ENCODE measurements at regions of chr12 and their contacts with region 1.

Region 1: GRCh38 chr12:124493809-124494750 is 73.3 kb downstream of the NCOR2 start:
- DNase-seq: peak; percentile 96
- CTCF ChIP-seq: no peak

Region 2: DNA sequence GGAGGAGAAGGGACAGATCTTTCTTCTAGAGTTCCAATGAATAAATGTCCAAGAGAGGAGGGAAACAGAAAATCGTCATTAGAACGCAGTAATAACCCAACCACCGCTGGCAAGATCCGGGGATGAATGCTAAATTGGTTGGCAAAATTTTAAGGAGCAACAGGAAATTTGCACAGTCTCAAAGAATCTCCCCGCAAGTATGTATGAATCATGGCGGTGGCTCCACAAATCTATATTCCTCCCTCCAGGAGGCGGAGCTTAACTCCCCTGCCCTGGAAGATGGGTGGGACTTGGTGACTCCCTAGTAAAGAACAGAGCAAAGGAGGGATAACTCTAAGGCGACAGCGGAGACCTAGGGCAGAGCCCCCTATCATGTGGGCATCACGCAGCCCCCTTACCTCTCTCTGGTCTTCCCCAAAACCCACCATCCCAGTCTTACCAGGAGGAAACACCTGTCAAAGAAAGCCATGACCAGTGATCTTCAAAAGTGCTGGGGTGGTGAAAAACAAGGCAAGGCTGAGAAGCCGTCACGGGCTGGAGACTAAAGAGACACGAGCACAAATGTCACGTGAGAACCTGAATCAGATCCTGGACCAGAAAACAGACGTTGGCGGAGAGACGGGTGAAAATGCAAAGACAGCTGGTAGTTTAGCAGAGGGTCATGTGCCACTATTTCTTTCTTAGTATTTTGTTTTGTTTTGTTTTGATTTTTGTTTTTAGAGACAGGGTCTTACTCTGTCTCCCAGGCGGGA is 52.5 kb before region 1 on chr12:
- CTCF ChIA-PET with region 1: no interaction called
- POLR2A ChIA-PET with region 1: no interaction called
- DNase-seq: no peak
- CTCF ChIP-seq: no peak

Region 3: GRCh38 chr12:124504325-124504992 is 10.4 kb after region 1 on chr12:
- CTCF ChIA-PET with region 1: interaction called, 26 read pairs
- POLR2A ChIA-PET with region 1: no interaction called
- DNase-seq: no peak
- CTCF ChIP-seq: no peak

Region 4: DNA sequence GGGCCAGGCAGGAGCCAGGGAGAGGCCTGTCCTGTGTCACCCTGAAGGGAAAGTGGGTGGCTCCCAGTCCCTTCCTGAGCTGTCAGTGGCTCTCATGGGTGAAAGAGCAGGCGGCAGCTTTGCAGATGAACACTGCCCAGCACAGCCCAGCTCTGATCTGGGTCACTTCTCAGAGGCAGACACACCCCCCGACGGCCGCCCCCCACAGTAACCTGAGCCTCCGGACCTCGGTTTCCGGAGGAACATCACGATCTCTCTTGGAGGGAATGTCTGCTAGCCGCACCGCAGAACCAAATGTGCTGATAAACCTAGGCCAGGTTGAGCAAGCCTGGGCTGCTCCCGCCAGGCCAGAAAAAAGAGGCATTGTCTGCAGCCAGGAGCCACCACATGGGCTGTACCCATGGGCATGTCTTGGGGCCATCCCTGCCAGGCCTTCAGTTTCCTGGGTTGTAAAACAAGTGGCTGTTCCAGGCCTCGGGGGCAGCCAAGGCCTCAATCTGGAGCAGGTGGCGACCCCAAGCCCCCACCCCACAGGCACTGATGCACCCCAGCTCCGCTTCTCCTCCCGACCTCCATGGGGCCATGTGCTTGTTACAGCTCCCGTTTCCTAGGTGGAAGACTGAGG is 15.7 kb after region 1 on chr12:
- CTCF ChIA-PET with region 1: interaction called, 26 read pairs
- POLR2A ChIA-PET with region 1: no interaction called
- DNase-seq: no peak
- CTCF ChIP-seq: no peak